ENCODE measurements at regions of chr10 and their contacts with region 1.

Region 1: GRCh38 chr10:37976091-37976879 is at the start of gene ZNF25:
- DNase-seq: peak; percentile 99
- H3K4me3 Mint-ChIP-seq: peak within 1 kb of the TSS; percentile 88
- H3K27ac Mint-ChIP-seq: peak within 1 kb of the TSS; percentile 98
- H3K4me1 Mint-ChIP-seq: peaks cover 25% of the 10 kb centered on the region
- H3K27me3 Mint-ChIP-seq: no peaks in the 10 kb centered on the region
- total RNA-seq, gene ZNF25: 5.0 to 5.3 TPM

Region 2: GRCh38 chr10:37992083-37992482 is 15.8 kb after region 1 on chr10:
- CTCF ChIA-PET with region 1: interaction called, 10 read pairs
- POLR2A ChIA-PET with region 1: no interaction called
- DNase-seq: no peak
- H3K4me3 Mint-ChIP-seq: no peak overlapping the region
- H3K27ac Mint-ChIP-seq: no peak overlapping the region
- H3K4me1 Mint-ChIP-seq: no peaks in the 10 kb centered on the region
- H3K27me3 Mint-ChIP-seq: no peaks in the 10 kb centered on the region

Measured in activated CD4-positive, alpha-beta T cell treated with anti-CD3 and anti-CD28 coated beads, Interleukin-2, amount 10 ng/mL, durations not matched to agents 7 days and 5 days (primary cell).